CD8-positive, alpha-beta T cell (primary cell): ENCODE measurements at regions of chr13 and their contacts with region 1.

Region 1: DNA sequence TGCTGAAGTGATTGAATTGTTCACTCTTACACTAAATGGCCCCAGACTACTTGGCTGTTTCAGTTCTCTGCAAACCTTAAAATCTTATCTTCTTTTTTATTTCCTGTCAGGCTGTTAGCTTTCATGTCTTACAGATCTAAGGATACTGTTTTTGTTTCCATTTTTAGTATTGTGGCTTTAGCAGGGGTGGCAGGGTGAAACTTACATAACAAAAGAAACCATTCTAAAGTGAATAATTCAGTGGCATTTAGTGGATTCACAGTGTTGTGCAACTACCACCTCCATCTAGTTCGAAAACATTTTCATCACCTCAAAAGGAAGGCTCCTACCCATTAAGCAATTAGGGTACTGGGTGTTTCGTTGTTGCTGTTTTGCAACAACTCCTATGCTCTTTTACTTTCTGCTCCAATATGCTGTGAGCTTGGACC is 19.8 kb downstream of the TMEM272 start:
- DNase-seq: peak in 2 of 9 experiments; percentile 60 to 77
- ATAC-seq: peak; percentile 60
- H3K4me3 ChIP-seq: peak overlapping the region; percentile 55 to 59
- H3K4me3 Mint-ChIP-seq: peak overlapping the region; percentile 91
- H3K27ac ChIP-seq: peak overlapping the region; percentile 64 to 74
- H3K27ac Mint-ChIP-seq: peak overlapping the region; percentile 97
- H3K4me1 ChIP-seq: peaks cover 80% of the 10 kb centered on the region
- H3K4me1 Mint-ChIP-seq: peaks cover 91% of the 10 kb centered on the region
- H3K27me3 ChIP-seq: no peaks in the 10 kb centered on the region
- H3K27me3 Mint-ChIP-seq: no peaks in the 10 kb centered on the region
- CTCF ChIP-seq: no peak

Region 2: GRCh38 chr13:51814825-51815650 is 10.1 kb before region 1 on chr13:
- CTCF ChIA-PET with region 1: interaction called, 161 read pairs
- POLR2A ChIA-PET with region 1: interaction called, 143 read pairs
- intact Hi-C with region 1: loop called in 1 of 2 experiments (anchors 1 kb)
- DNase-seq: peak; percentile 49 to 89 (median 76)
- ATAC-seq: peak; percentile 82
- H3K4me3 ChIP-seq: peak overlapping the region; percentile 12 to 23
- H3K4me3 Mint-ChIP-seq: peak overlapping the region; percentile 70
- H3K27ac ChIP-seq: peak overlapping the region in 1 of 2 experiments; percentile 18
- H3K27ac Mint-ChIP-seq: peak overlapping the region; percentile 92
- H3K4me1 ChIP-seq: peaks cover 63% of the 10 kb centered on the region
- H3K4me1 Mint-ChIP-seq: peaks cover 79% of the 10 kb centered on the region
- H3K27me3 ChIP-seq: no peaks in the 10 kb centered on the region
- H3K27me3 Mint-ChIP-seq: no peaks in the 10 kb centered on the region
- CTCF ChIP-seq: peak; percentile 92

Region 3: DNA sequence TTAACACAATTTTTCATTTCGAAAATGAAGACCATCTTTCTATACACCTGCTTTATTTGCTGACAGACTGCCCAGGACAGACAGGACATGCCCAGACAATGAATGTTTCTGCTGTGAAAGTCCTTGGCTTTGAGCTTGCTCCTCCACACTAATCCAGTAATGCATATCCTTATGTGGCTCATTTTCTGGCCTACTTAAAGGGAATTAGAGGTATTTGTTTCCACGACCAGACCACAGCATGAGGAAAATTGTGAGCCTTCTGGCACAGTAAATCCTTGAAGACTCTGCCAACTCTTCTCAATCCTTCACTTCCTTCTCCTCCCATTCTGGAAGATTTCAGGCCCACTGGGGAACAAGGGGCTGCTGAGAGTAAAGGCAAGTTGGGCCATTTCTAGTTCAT is 62.3 kb after region 1 on chr13:
- CTCF ChIA-PET with region 1: no interaction called
- POLR2A ChIA-PET with region 1: no interaction called
- intact Hi-C with region 1: no loop called
- DNase-seq: no peak
- ATAC-seq: no peak
- H3K4me3 ChIP-seq: no peak overlapping the region
- H3K4me3 Mint-ChIP-seq: no peak overlapping the region
- H3K27ac ChIP-seq: no peak overlapping the region
- H3K27ac Mint-ChIP-seq: no peak overlapping the region
- H3K4me1 ChIP-seq: no peaks in the 10 kb centered on the region
- H3K4me1 Mint-ChIP-seq: no peaks in the 10 kb centered on the region
- H3K27me3 ChIP-seq: no peaks in the 10 kb centered on the region
- H3K27me3 Mint-ChIP-seq: peaks cover 2% of the 10 kb centered on the region
- CTCF ChIP-seq: no peak

Region 4: GRCh38 chr13:52723181-52723580 is 898.0 kb after region 1 on chr13:
- CTCF ChIA-PET with region 1: no interaction called
- POLR2A ChIA-PET with region 1: no interaction called
- intact Hi-C with region 1: no loop called
- DNase-seq: no peak
- ATAC-seq: no peak
- H3K4me3 ChIP-seq: no peak overlapping the region
- H3K4me3 Mint-ChIP-seq: no peak overlapping the region
- H3K27ac ChIP-seq: no peak overlapping the region
- H3K27ac Mint-ChIP-seq: no peak overlapping the region
- H3K4me1 ChIP-seq: no peaks in the 10 kb centered on the region
- H3K4me1 Mint-ChIP-seq: no peaks in the 10 kb centered on the region
- H3K27me3 ChIP-seq: no peaks in the 10 kb centered on the region
- H3K27me3 Mint-ChIP-seq: peaks cover 19% of the 10 kb centered on the region
- CTCF ChIP-seq: no peak